ENCODE measurements at regions of chr16 and their contacts with region 1.

Region 1: DNA sequence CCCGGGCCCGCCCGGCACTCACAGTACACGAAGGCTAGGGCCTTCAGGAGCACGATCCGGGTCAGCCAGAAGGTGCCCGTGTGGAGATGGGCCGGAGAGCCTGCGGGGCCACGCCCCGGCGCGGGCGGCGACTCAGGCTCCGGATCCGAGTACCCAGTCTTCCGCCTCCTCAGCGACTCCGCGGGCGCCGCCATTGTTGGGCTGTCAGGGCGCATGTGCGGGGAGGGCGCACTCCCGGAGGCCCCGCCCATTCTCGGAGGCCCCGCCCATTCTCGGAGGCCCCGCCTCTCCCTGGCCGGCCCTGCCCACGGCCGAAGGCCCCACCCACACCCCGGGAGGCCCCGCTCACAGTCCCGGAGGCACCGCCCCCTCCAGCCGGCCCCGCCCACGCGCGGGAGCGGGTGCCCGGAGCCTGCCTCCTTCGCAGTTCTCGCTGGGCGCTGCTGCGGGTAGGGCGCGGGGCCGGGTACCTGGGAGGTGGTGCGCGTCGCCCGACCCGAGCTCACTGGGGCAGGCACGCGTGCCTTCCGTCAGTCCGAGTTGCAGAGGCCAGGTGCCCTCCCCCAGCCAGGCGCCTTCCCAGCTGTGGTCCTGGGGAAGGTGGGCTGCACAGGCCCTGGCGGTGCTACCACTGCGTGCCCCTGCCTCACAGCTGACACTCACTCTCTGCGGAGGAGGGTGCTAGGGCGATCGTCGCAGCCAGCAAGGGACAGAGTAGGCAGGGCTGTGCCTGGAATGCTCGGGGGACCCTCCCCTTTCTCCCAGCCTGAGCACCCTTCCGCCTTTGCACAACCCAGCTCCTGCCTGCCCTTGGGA is at the start of gene LMF1:
- DNase-seq: peak; percentile 93 to 98 (median 94)
- ATAC-seq: peak; percentile 97 to 99 (median 98)
- H3K4me3 ChIP-seq: peak within 1 kb of the TSS; percentile 49 to 99 (median 90)
- H3K27ac ChIP-seq: peak within 1 kb of the TSS; percentile 55 to 92 (median 84)
- H3K4me1 ChIP-seq: peaks cover 2 to 29% (median 18%) of the 10 kb centered on the region in 12 donors
- H3K27me3 ChIP-seq: no peaks in the 10 kb centered on the region
- CTCF ChIP-seq: no peak
- POLR2A ChIP-seq: peak in 1 of 2 donors; percentile 72
- total RNA-seq, gene LMF1: 4.3 to 19.2 (median 7.4) TPM

Region 2: GRCh38 chr16:807347-808084 is 163.5 kb before region 1 on chr16:
- intact Hi-C with region 1: loop called in 1 of 10 experiments (anchors 2 kb)
- DNase-seq: peak; percentile 94 to 97 (median 96)
- ATAC-seq: peak; percentile 95 to 99 (median 98)
- H3K4me3 ChIP-seq: peak overlapping the region; percentile 74 to 98 (median 90)
- H3K27ac ChIP-seq: peak overlapping the region; percentile 77 to 98 (median 93)
- H3K4me1 ChIP-seq: peaks cover 0 to 25% (median 12%) of the 10 kb centered on the region in 12 donors
- H3K27me3 ChIP-seq: peaks cover 0 to 26% (median 2%) of the 10 kb centered on the region in 9 donors
- CTCF ChIP-seq: peak in 1 of 12 donors; percentile 10
- POLR2A ChIP-seq: peak in 1 of 2 donors; percentile 68

Region 3: DNA sequence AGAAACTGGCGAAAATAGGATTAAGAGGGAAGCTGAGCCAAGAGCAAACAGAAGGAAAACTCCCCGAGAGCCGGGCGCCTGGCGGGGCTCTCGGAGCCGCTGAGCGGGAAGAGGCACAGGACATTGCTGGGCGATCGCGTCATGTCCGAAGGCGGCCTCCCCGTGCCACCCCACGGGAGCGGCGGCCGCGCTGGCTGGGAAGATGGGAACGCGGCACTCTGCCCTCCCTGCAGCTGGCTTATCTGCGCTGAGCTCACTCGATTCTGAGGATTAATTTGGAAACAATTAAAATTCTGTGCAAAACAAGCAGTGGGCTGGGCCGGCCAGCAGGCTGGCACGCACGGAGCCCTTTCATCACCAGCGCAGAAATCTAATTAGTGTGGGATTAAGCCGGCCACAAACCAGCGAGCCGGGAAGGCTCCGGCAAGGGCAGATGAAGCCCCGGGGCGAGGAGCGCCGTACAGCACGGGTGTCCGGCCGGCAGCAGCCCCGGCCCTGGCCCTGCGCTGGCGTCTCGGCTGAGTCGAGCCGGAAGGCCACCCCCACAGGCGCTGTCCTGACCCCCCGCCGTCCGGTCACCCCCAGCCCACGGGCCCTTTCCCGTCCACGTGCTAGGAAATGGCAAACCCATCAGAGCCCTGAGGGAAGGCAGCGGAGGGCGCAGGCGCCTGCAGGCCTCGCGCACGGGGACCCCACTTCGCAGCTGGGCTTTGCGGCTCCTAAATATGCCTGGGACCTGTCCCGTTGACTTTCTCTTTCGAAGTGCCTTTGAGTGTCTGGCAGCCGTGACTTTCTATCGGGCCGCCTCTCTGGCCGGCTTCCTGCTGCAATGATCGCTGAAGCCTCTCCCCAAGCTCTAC is 48.5 kb after region 1 on chr16:
- intact Hi-C with region 1: loop called in 1 of 10 experiments (anchors 5 kb)
- DNase-seq: peak in 4 of 5 donors; percentile 56 to 81 (median 58)
- ATAC-seq: peak; percentile 23 to 81 (median 76)
- H3K4me3 ChIP-seq: peak overlapping the region in 11 of 12 donors; percentile 13 to 55 (median 43)
- H3K27ac ChIP-seq: peak overlapping the region in 10 of 12 donors; percentile 48 to 77 (median 67)
- H3K4me1 ChIP-seq: peaks cover 0 to 28% (median 3%) of the 10 kb centered on the region in 12 donors
- H3K27me3 ChIP-seq: peaks cover 0 to 47% (median 15%) of the 10 kb centered on the region in 9 donors
- CTCF ChIP-seq: no peak
- POLR2A ChIP-seq: no peak